ENCODE measurements at regions of chr4 and their contacts with region 1.

Region 1: GRCh38 chr4:13654158-13654797 is 26.8 kb upstream of the BOD1L1 start:
- DNase-seq: peak; percentile 89
- H3K4me3 ChIP-seq: peak overlapping the region; percentile 50
- H3K27ac ChIP-seq: peak overlapping the region; percentile 83
- H3K4me1 ChIP-seq: peaks cover 16% of the 10 kb centered on the region
- H3K27me3 ChIP-seq: no peaks in the 10 kb centered on the region
- CTCF ChIP-seq: peak; percentile 74

Region 2: GRCh38 chr4:13143222-13144070 is 510.8 kb before region 1 on chr4:
- CTCF ChIA-PET with region 1: no interaction called
- POLR2A ChIA-PET with region 1: no interaction called
- intact Hi-C with region 1: no loop called
- DNase-seq: no peak
- H3K4me3 ChIP-seq: no peak overlapping the region
- H3K27ac ChIP-seq: no peak overlapping the region
- H3K4me1 ChIP-seq: no peaks in the 10 kb centered on the region
- H3K27me3 ChIP-seq: no peaks in the 10 kb centered on the region
- CTCF ChIP-seq: no peak

Region 3: DNA sequence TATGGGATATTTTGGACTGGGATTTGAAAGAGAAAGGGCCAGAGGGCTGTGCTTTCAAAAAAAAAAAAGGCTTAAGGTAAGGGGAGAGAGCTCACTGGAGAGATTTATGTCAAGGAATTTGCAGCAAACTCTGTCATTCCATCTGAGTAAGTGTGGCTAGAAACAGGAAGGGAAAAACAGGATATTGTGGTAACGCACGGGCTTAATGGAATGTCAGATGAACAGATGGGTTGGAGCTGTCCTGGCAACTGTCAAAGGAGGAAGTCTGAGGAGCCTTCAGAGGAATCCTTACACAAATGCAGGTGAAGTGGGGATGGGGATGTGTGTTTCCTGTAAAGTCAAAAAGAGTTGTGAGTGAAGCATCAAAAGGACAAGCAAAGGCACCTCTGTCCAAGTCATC is 94.9 kb before region 1 on chr4:
- CTCF ChIA-PET with region 1: no interaction called
- POLR2A ChIA-PET with region 1: no interaction called
- intact Hi-C with region 1: no loop called
- DNase-seq: no peak
- H3K4me3 ChIP-seq: no peak overlapping the region
- H3K27ac ChIP-seq: no peak overlapping the region
- H3K4me1 ChIP-seq: no peaks in the 10 kb centered on the region
- H3K27me3 ChIP-seq: no peaks in the 10 kb centered on the region
- CTCF ChIP-seq: no peak

Region 4: DNA sequence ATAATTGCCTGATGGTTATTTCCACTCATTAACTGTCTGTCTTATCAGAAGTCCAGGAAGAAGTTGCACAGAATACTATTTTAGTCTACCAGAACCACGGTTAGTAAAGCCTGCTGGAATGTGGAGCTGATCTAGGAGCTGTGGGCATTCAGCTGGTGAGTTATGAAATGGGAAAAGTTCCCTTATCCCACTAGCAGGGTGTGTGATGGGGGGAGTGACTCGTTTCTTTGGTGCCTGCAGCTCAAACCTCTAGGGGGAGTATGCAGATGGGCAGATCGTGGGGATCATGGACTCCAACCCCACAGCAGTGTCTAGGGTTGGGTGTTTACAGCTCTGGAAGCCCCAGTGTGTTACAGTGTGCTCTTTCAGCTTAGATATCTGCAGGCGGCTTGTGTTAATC is 278.9 kb after region 1 on chr4:
- CTCF ChIA-PET with region 1: no interaction called
- POLR2A ChIA-PET with region 1: no interaction called
- intact Hi-C with region 1: no loop called
- DNase-seq: no peak
- H3K4me3 ChIP-seq: no peak overlapping the region
- H3K27ac ChIP-seq: no peak overlapping the region
- H3K4me1 ChIP-seq: peaks cover 5% of the 10 kb centered on the region
- H3K27me3 ChIP-seq: no peaks in the 10 kb centered on the region
- CTCF ChIP-seq: peak; percentile 16; the same call in 1 of the 2 replicates

Region 5: GRCh38 chr4:14383652-14384051 is 729.4 kb after region 1 on chr4:
- CTCF ChIA-PET with region 1: no interaction called
- POLR2A ChIA-PET with region 1: no interaction called
- intact Hi-C with region 1: loop called (anchors 10 kb)
- DNase-seq: no peak
- H3K4me3 ChIP-seq: no peak overlapping the region
- H3K27ac ChIP-seq: no peak overlapping the region
- H3K4me1 ChIP-seq: no peaks in the 10 kb centered on the region
- H3K27me3 ChIP-seq: no peaks in the 10 kb centered on the region
- CTCF ChIP-seq: no peak

Region 6: GRCh38 chr4:14644580-14645282 is 990.5 kb after region 1 on chr4:
- CTCF ChIA-PET with region 1: interaction called, 4 read pairs
- POLR2A ChIA-PET with region 1: no interaction called
- intact Hi-C with region 1: loop called (anchors 2 kb)
- DNase-seq: no peak
- H3K4me3 ChIP-seq: no peak overlapping the region
- H3K27ac ChIP-seq: peak overlapping the region; percentile 100
- H3K4me1 ChIP-seq: peaks cover 50% of the 10 kb centered on the region
- H3K27me3 ChIP-seq: no peaks in the 10 kb centered on the region
- CTCF ChIP-seq: no peak

Region 7: GRCh38 chr4:15001869-15002658 is 1347.8 kb after region 1 on chr4 and contains the start of gene CPEB2:
- CTCF ChIA-PET with region 1: no interaction called
- POLR2A ChIA-PET with region 1: no interaction called
- intact Hi-C with region 1: loop called (anchors 5 kb)
- DNase-seq: peak; percentile 98
- H3K4me3 ChIP-seq: peak within 1 kb of the TSS; percentile 88
- H3K27ac ChIP-seq: peak within 1 kb of the TSS; percentile 100
- H3K4me1 ChIP-seq: peaks cover 17% of the 10 kb centered on the region
- H3K27me3 ChIP-seq: no peaks in the 10 kb centered on the region
- CTCF ChIP-seq: no peak
- total RNA-seq, gene CPEB2: 75.5 and 80.1 TPM in 2 replicates

Region 8: DNA sequence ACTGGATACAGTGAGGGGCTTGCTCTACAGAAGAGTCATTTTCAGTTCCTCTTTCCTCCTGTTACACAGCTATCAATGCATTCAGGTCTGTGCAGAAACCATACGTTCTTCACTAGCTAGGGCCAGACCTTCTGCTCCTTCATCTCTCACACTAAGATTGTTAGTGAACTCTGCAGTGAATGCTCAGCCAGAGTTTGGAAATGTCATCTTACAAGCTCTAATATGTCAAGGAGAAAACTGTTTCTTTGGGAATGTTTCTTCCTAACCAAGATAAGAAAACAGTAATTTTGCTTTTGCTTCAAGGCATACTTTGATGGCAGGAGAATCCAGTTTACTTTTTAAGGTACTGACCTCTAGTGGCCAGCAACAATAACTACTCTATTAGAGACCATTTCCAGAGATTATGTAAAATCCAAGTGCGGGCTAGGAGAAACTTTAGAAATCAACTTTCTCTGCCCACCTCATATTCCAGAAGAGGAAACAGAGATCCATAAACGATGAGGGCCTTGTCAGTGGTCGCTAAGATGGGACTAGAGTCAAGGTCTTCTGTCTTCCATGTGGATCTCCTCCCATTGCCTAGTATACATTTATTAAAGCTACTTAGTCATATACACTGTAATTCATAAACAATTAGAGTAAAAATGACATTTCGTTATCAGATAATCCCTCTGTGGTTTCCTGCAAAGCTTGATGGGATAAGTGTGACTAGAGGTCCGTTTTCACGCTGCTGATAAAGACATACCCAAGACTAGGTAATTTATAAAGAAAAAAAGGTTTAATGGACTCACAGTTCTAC is 1803.3 kb after region 1 on chr4:
- CTCF ChIA-PET with region 1: no interaction called
- POLR2A ChIA-PET with region 1: no interaction called
- intact Hi-C with region 1: loop called (anchors 10 kb)
- DNase-seq: peak; percentile 78
- H3K4me3 ChIP-seq: no peak overlapping the region
- H3K27ac ChIP-seq: no peak overlapping the region
- H3K4me1 ChIP-seq: peaks cover 32% of the 10 kb centered on the region
- H3K27me3 ChIP-seq: no peaks in the 10 kb centered on the region
- CTCF ChIP-seq: peak; percentile 79

Measured in A673 (cell line).